H1 (cell line): ENCODE measurements at regions of chr18 and their contacts with region 1.

Region 1: GRCh38 chr18:49486953-49487710 is at the start of gene C18orf32:
- DNase-seq: peak; percentile 90 to 94
- H3K4me3 ChIP-seq: peak within 1 kb of the TSS; percentile 72 to 93 (median 90)
- H3K27ac ChIP-seq: peak within 1 kb of the TSS; percentile 73; the same call in 1 of the 2 replicates
- H3K4me1 ChIP-seq: peaks cover 0 to 8% (median 0%) of the 10 kb centered on the region in 4 experiments; a peak in 2 of 7 replicates
- H3K27me3 ChIP-seq: no peaks in the 10 kb centered on the region
- CTCF ChIP-seq: no peak
- EP300 ChIP-seq: no peak
- POLR2A ChIP-seq: peak; percentile 92 to 98
- RAD21 ChIP-seq: peak; percentile 14 to 21; a peak in 3 of 4 replicates
- total RNA-seq, gene C18orf32: 20.1 and 22.9 TPM in 2 replicates

Region 2: DNA sequence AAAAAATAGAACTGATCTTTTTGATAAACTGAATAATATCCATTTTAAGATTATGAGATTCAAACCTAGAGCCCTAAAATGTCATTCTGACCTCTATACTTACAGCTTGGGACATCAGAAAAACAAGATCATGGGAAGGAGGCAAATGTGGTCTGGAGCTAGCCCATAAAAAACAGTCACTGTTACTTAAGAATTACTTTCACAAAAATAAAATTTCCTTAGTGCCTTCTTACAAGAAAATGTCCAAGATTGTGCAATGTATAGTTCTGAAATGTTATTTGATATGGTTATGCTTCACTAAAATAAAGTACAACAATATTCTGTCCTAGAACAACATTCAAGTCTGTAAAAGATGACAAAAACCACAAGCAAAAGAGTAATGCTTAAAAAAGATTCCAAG is 274.3 kb before region 1 on chr18:
- CTCF ChIA-PET with region 1: no interaction called
- POLR2A ChIA-PET with region 1: no interaction called
- DNase-seq: no peak
- H3K4me3 ChIP-seq: no peak overlapping the region
- H3K27ac ChIP-seq: no peak overlapping the region
- H3K4me1 ChIP-seq: no peaks in the 10 kb centered on the region
- H3K27me3 ChIP-seq: no peaks in the 10 kb centered on the region
- CTCF ChIP-seq: no peak
- EP300 ChIP-seq: no peak
- POLR2A ChIP-seq: no peak
- RAD21 ChIP-seq: no peak

Region 3: DNA sequence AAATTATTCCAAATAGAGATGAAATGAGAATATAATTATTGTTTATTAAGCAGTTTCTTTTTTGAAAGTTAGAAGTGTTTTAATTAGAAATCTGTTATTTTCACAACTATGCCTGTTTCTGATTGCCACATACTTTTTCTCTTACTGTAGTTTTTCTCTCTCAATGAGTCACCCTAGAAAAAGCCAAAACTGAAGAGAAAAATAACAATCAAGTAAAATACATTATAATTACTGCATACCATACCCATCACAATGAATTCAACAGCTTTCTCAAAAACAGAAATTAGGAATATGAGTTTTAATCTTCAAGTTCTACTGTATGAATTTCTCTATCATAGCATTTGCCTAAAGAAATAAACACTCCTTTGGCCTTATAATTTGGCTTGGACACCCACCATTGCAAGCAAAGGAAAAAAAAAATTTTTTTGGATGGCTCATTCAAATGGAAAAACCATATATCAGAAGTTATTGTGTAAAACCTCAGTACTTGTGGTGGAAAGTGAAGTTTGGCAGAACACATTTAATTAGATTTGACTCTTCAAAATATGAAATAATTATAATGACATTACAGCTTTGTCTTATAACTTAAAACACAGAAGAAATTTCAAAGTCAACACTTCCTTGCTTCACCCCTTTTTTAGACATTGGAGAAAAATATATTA is 165.2 kb before region 1 on chr18:
- CTCF ChIA-PET with region 1: no interaction called
- POLR2A ChIA-PET with region 1: no interaction called
- DNase-seq: no peak
- H3K4me3 ChIP-seq: no peak overlapping the region
- H3K27ac ChIP-seq: no peak overlapping the region
- H3K4me1 ChIP-seq: peaks cover 0 to 4% (median 3%) of the 10 kb centered on the region in 4 experiments; a peak in 3 of 7 replicates
- H3K27me3 ChIP-seq: no peaks in the 10 kb centered on the region
- CTCF ChIP-seq: no peak
- EP300 ChIP-seq: no peak
- POLR2A ChIP-seq: no peak
- RAD21 ChIP-seq: no peak

Region 4: DNA sequence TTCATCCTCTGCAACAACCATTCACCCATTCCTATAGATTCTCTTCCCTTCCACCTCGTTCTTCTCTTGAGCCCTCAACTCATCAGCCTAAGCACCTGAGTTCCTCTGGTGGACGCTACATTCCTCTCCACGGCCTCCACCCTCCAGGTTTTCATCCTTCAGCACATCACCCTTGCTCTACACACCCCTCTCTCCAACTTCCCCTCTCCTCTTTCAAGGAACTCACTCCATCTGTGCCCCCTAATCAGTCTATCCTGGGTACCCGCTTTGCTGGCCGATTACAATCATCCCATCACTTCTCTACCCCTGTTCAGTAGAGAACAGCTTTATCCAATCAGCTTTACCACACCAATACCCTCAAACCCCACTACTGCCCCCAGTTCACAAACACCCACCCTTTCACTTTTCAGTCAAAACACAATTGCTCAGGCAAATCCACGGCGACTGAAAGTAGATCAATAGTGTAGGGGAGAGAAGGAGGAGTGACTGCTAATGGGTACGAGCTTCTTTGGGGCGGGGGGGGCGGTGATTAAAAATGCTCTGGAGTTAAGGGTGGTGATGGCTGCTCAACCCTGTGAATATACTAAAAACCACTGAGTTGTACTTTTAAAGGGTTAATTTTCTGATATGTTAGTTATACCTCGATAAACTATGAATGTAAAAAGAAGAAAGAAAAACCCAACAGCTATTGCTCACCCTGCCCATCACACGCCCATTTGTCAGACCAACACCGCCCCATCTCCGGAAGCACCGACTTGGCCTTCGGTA is 27.5 kb before region 1 on chr18:
- CTCF ChIA-PET with region 1: interaction called, 6 read pairs
- POLR2A ChIA-PET with region 1: interaction called, 34 read pairs
- DNase-seq: no peak
- H3K4me3 ChIP-seq: peak overlapping the region; percentile 76 to 97 (median 84)
- H3K27ac ChIP-seq: no peak overlapping the region
- H3K4me1 ChIP-seq: peaks cover 0 to 5% (median 2%) of the 10 kb centered on the region in 4 experiments; a peak in 4 of 7 replicates
- H3K27me3 ChIP-seq: no peaks in the 10 kb centered on the region
- CTCF ChIP-seq: no peak
- EP300 ChIP-seq: no peak
- POLR2A ChIP-seq: no peak
- RAD21 ChIP-seq: no peak

Region 5: GRCh38 chr18:49464718-49465598 is 22.2 kb before region 1 on chr18:
- CTCF ChIA-PET with region 1: interaction called, 6 read pairs
- POLR2A ChIA-PET with region 1: interaction called, 34 read pairs
- DNase-seq: peak; percentile 59 to 60
- H3K4me3 ChIP-seq: peak overlapping the region in 1 of 4 experiments; percentile 17; a peak in 3 of 8 replicates
- H3K27ac ChIP-seq: no peak overlapping the region
- H3K4me1 ChIP-seq: peaks cover 0 to 14% (median 7%) of the 10 kb centered on the region in 4 experiments; a peak in 5 of 7 replicates
- H3K27me3 ChIP-seq: no peaks in the 10 kb centered on the region
- CTCF ChIP-seq: no peak
- EP300 ChIP-seq: no peak
- POLR2A ChIP-seq: no peak
- RAD21 ChIP-seq: peak; percentile 4 to 10; a peak in 1 of 4 replicates

Region 6: DNA sequence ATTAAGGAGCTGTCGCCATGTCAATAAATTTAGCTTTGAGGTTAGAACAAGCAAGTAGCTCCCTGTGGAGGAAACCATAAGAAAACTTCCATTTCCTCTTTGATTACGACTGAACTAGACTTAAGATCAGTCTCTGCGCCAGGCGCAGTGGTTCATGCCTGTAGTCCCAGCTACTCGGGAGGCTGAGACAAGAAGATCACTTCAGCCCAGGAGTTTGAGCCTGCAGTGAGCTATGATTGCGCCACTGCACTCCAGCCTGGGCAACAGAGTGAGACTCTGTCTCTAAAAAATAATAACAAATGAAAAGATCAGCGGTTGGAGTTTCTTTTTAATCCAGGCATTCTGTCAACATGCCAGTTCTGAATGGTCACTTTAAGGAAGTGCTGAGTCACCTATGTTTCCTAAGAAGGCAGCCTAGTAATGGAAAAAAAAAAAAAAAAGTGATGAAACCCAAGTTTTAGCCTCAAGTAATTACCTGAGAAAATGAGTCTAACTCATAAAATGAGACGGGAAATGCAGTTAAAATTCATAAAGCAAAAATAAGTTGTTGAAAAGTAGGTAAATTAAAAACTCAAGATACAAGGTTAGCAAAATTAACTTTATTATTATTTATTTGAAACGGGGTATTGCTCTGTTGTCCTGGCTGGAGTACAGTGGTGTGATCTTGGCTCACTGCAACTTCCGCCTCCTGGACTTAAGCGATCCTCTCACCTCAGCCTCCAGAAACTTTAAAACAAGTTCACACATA is 10.3 kb before region 1 on chr18:
- CTCF ChIA-PET with region 1: interaction called, 3 read pairs
- POLR2A ChIA-PET with region 1: interaction called, 59 read pairs
- DNase-seq: no peak
- H3K4me3 ChIP-seq: no peak overlapping the region
- H3K27ac ChIP-seq: no peak overlapping the region
- H3K4me1 ChIP-seq: no peaks in the 10 kb centered on the region
- H3K27me3 ChIP-seq: no peaks in the 10 kb centered on the region
- CTCF ChIP-seq: no peak
- EP300 ChIP-seq: no peak
- POLR2A ChIP-seq: no peak
- RAD21 ChIP-seq: no peak

Region 7: GRCh38 chr18:49500201-49500921 is 13.2 kb after region 1 on chr18:
- CTCF ChIA-PET with region 1: interaction called, 3 read pairs
- POLR2A ChIA-PET with region 1: interaction called, 58 read pairs
- DNase-seq: no peak
- H3K4me3 ChIP-seq: peak overlapping the region in 1 of 4 experiments; percentile 29; a peak in 2 of 8 replicates
- H3K27ac ChIP-seq: no peak overlapping the region
- H3K4me1 ChIP-seq: peaks cover 2 to 9% (median 9%) of the 10 kb centered on the region in 4 experiments; a peak in 3 of 7 replicates
- H3K27me3 ChIP-seq: no peaks in the 10 kb centered on the region
- CTCF ChIP-seq: peak in 2 of 3 experiments; percentile 12 to 25; a peak in 3 of 4 replicates
- EP300 ChIP-seq: peak in 1 of 2 experiments; percentile 41; a peak in 1 of 3 replicates
- POLR2A ChIP-seq: no peak
- RAD21 ChIP-seq: no peak; a peak in 1 of 4 replicates